ENCODE measurements at regions of chr12 and their contacts with region 1.

Region 1: DNA sequence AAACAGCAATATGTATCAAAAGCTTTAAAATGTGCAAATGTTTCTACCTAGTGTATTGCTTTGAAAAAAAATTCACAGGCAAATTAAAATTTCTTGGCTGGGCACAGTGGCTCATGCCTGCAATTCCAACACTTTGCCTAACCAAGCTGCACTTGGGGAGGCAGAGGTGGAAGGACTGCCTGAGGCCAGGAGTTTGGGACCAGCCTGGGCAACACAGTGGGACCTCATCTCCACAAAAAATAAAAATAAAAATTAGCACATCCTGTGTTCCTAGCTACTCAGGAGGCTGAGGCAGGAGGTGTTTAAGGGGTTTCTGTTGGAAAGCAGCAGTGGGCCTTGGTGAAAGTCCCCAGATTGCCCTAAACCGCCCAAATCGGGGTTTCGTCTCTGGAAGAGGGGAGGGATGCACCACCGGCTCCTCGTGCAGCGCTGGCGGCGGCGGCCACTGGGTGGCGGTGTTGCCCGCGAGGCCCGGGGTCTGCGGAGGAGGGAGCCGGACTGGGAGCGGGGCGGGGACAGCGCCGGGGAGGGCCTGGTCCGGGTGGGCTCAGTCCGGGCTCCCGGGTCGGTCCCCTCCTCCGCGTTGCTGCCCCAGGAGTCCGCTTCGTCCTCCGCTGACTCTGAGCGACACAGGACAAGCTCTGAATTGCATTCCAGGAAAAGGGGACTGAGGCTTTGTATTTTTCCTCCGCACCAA is 265.6 kb downstream of the AACS start:
- DNase-seq: peak; percentile 51 to 76
- ATAC-seq: peak; percentile 86 to 94 (median 92)
- H3K4me3 ChIP-seq: peak overlapping the region in 9 of 10 donors; percentile 23 to 62 (median 49)
- H3K27ac ChIP-seq: peak overlapping the region in 2 of 10 donors; percentile 46 to 49
- H3K4me1 ChIP-seq: peaks cover 0 to 11% (median 4%) of the 10 kb centered on the region in 9 donors
- H3K27me3 ChIP-seq: peaks cover 0 to 46% (median 34%) of the 10 kb centered on the region in 7 donors
- CTCF ChIP-seq: peak; percentile 81 to 96 (median 90)

Region 2: DNA sequence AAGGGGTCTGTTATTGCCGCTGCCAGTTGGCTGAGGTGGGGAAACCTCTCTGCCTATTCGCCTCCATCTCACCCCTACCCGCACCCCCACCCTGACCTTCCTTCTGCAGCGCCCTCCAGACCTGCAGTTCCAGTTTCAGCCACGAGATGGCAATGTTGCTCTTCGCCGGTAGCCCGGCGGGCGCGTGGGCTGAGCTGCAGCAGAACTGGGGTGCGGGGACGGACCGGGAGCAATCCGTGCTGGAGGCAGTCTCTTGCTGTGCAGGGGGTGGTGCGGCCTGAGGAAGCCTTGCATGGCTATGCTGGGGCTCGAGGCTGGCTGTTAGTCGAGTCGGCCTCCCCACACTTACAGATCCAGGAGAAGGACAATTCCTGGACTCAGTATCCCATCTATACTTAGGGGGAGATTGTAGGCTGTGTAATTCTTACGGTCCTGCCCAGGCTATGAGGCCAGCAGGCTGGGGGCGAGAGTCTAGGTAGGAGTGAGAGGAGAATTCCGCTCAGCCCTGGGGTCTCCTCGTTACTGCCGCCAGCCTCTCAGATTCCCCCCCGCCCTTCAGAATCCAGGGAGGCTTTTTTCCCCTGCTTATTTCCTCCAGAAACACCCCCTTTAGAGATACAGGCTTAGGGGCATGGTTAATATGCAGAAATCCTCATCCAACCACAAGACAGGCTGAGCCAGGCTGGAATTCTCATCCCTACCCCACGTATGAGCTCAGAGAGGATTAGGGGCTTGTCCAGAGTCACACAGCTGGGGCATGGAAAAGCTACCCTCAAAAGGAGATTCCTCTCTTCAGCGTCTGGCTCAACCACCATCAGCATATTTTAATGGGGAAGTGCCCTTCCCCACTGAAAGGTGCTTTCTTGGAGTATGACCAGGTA is 147.4 kb before region 1 on chr12:
- intact Hi-C with region 1: loop called in 2 of 10 experiments (anchors 10 kb)
- DNase-seq: peak; percentile 67 to 78
- ATAC-seq: peak; percentile 50 to 84 (median 73)
- H3K4me3 ChIP-seq: no peak overlapping the region
- H3K27ac ChIP-seq: no peak overlapping the region
- H3K4me1 ChIP-seq: peaks cover 3 to 30% (median 11%) of the 10 kb centered on the region in 9 donors
- H3K27me3 ChIP-seq: peaks cover 7 to 72% (median 46%) of the 10 kb centered on the region in 7 donors
- CTCF ChIP-seq: peak; percentile 92 to 100 (median 99)

Region 3: GRCh38 chr12:125259178-125259867 is 71.5 kb before region 1 on chr12:
- intact Hi-C with region 1: no loop called
- DNase-seq: no peak
- ATAC-seq: no peak
- H3K4me3 ChIP-seq: no peak overlapping the region
- H3K27ac ChIP-seq: no peak overlapping the region
- H3K4me1 ChIP-seq: no peaks in the 10 kb centered on the region
- H3K27me3 ChIP-seq: peaks cover 0 to 15% (median 0%) of the 10 kb centered on the region in 7 donors
- CTCF ChIP-seq: no peak

Region 4: DNA sequence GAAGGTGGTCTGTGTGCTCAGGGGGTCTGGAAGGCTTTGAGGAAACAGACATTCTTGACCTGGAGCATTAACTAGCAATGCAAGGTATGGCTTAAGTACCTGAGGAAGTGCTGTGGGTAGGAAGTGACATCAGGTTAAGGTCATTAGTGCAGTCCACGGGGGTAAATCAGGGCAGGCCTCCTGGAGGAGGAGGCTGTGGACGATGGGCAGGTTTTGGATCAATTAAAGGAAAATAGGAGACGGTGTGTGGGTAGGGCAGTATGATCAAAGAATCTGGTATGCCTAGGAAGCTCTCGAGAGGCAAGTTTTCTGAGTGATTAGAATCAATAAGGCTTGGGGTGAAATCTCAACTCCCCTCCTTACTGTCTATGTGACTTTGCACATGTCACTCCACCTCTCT is 29.7 kb after region 1 on chr12:
- intact Hi-C with region 1: no loop called
- DNase-seq: no peak
- ATAC-seq: no peak
- H3K4me3 ChIP-seq: no peak overlapping the region
- H3K27ac ChIP-seq: no peak overlapping the region
- H3K4me1 ChIP-seq: no peaks in the 10 kb centered on the region
- H3K27me3 ChIP-seq: peaks cover 0 to 4% (median 0%) of the 10 kb centered on the region in 7 donors
- CTCF ChIP-seq: no peak

Region 5: GRCh38 chr12:125402874-125403789 is 72.3 kb after region 1 on chr12:
- intact Hi-C with region 1: loop called in 8 of 10 experiments (anchors 2 to 5 kb)
- DNase-seq: no peak
- ATAC-seq: no peak
- H3K4me3 ChIP-seq: no peak overlapping the region
- H3K27ac ChIP-seq: no peak overlapping the region
- H3K4me1 ChIP-seq: no peaks in the 10 kb centered on the region
- H3K27me3 ChIP-seq: peaks cover 0 to 30% (median 23%) of the 10 kb centered on the region in 7 donors
- CTCF ChIP-seq: peak; percentile 24 to 72 (median 63)

Region 6: GRCh38 chr12:125455556-125455955 is 124.8 kb after region 1 on chr12:
- intact Hi-C with region 1: no loop called
- DNase-seq: no peak
- ATAC-seq: no peak
- H3K4me3 ChIP-seq: no peak overlapping the region
- H3K27ac ChIP-seq: no peak overlapping the region
- H3K4me1 ChIP-seq: no peaks in the 10 kb centered on the region
- H3K27me3 ChIP-seq: peaks cover 0 to 19% (median 6%) of the 10 kb centered on the region in 7 donors
- CTCF ChIP-seq: no peak

Region 7: DNA sequence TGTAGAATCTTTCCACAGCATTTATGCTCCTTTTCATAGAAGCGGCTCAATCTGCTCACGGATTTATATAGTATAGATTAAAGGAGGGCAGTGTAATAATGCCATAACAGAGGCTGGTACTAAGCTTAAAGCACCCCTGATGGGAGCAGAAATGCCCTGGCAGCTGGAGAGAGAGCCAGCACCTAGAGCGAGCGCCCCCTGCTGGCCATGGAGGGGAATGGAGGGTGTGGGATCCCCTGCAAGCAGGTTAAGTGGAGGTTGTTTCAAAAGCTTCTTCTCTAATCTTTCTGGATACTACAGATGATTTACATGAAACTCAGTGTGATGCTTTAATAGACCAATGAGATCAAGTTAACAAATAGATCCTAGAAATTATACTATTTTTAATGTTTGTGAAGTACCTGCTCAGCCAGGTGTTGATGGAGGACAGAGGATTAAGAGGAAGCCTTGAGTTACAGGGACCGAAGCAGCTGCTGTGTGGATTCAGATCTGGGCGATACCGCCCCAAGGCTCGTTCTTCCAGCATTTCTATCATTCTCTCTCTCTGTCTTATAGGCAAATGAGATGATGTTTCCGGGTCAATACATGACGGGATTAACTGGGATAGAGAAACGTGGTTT is 1416.8 kb after region 1 on chr12:
- intact Hi-C with region 1: loop called in 1 of 10 experiments (anchors 5 kb)
- DNase-seq: peak; percentile 17 to 43
- ATAC-seq: peak in 1 of 8 donors; percentile 55
- H3K4me3 ChIP-seq: no peak overlapping the region
- H3K27ac ChIP-seq: no peak overlapping the region
- H3K4me1 ChIP-seq: no peaks in the 10 kb centered on the region
- H3K27me3 ChIP-seq: peaks cover 0 to 15% (median 3%) of the 10 kb centered on the region in 7 donors
- CTCF ChIP-seq: peak; percentile 77 to 94 (median 89)

Measured in heart right ventricle (tissue), 16 donors.